ENCODE measurements at regions of chr2 and their contacts with region 1.

Region 1: DNA sequence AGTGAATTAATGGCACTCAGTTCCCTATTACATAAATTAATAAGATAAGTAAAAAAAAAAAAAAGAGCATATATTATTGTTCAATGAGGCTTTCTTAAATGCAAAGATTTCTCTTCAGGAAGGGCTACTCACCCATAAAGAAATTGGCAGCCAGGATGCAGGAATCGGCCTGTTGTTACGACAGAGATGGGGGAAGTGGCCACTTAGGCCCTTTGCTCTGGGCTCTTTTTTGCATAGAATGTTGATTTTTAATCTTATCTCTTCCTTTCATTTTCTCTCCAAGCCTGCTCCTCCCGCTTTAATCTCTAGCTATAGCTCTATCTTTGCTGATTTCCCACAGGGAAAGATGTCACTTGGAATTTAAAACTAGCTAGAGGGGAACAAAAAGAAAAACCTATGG is 391.8 kb upstream of the CRIM1 start:
- DNase-seq: no peak
- ATAC-seq: no peak

Region 2: GRCh38 chr2:36329746-36330472 is 366.1 kb after region 1 on chr2:
- intact Hi-C with region 1: loop called in 1 of 2 experiments (anchors 5 kb)
- DNase-seq: no peak
- ATAC-seq: peak; percentile 23 to 56

Measured in left cardiac atrium (tissue), 4 donors.